Endothelial cell of umbilical vein (primary cell): ENCODE measurements at regions of chr7 and their contacts with region 1.

Region 1: DNA sequence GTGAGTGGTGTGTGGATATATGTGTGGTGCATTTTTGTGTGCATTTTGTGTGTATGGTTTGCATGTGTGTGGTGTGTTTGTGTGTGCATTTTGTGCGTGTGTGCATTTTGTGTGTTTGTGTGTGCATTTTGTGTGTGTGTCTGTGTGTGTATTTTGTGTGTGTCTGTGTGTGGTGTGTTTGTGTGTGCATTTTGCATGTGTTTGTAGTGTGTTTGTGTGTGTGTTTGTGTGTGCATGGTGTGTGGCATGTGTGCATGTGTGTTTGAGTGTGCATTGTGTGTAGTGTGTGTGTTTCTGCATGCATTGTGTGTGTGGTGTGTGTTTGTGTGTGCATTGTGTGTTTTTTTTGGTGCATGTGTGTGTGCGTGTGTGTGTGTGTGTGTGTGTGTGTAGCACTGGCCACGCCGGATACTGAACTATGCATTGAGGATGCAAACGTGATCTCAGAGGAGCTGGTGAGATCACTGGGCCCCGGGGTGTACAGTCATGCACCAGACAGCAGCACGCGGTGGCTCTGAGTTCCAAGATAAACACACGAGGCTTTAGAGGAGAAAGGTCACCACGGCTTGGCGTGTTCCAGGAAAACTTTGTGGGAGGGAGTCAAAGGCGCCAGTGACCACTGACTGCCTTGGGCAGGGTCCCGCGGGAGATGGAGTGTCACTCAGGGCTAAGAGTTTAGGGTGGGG is 106.6 kb upstream of the SHH start:
- DNase-seq: peak; percentile 48
- H3K4me3 ChIP-seq: no peak overlapping the region
- H3K27ac ChIP-seq: peak overlapping the region; percentile 10
- H3K4me1 ChIP-seq: peaks cover 2% of the 10 kb centered on the region
- H3K27me3 ChIP-seq: no peaks in the 10 kb centered on the region
- CTCF ChIP-seq: no peak
- POLR2A ChIP-seq: no peak

Region 2: DNA sequence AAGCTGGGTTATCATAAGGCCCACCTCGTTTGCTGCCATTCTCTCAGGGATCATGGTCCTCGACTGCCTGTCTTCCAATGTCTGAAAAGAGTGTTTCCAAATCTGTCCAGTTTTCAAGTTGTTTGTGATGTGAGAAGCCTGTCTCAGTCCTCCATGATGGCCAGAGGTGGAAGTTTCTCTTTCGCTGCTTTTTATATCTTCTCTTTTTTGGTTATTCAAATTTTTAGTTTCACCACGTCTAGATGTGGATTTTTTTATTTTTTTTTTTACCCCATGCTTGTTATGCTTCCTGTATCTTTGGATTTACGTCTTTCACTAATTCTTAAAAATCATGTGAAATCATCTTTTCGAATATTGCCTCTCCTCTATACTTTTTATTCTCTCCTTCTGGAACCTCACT is 280.5 kb before region 1 on chr7:
- CTCF ChIA-PET with region 1: no interaction called
- POLR2A ChIA-PET with region 1: no interaction called
- dilution Hi-C with region 1: no loop called
- intact Hi-C with region 1: no loop called
- DNase-seq: no peak
- H3K4me3 ChIP-seq: no peak overlapping the region
- H3K27ac ChIP-seq: no peak overlapping the region
- H3K4me1 ChIP-seq: peaks cover 1% of the 10 kb centered on the region
- H3K27me3 ChIP-seq: peaks cover 0 to 3% of the 10 kb centered on the region in 2 experiments
- CTCF ChIP-seq: no peak
- POLR2A ChIP-seq: no peak

Region 3: GRCh38 chr7:155961241-155962190 is 42.7 kb after region 1 on chr7:
- CTCF ChIA-PET with region 1: no interaction called
- POLR2A ChIA-PET with region 1: no interaction called
- dilution Hi-C with region 1: no loop called
- intact Hi-C with region 1: loop called (anchors 1 kb)
- DNase-seq: no peak
- H3K4me3 ChIP-seq: no peak overlapping the region
- H3K27ac ChIP-seq: peak overlapping the region; percentile 53
- H3K4me1 ChIP-seq: peaks cover 3% of the 10 kb centered on the region
- H3K27me3 ChIP-seq: no peaks in the 10 kb centered on the region
- CTCF ChIP-seq: no peak
- POLR2A ChIP-seq: no peak

Region 4: DNA sequence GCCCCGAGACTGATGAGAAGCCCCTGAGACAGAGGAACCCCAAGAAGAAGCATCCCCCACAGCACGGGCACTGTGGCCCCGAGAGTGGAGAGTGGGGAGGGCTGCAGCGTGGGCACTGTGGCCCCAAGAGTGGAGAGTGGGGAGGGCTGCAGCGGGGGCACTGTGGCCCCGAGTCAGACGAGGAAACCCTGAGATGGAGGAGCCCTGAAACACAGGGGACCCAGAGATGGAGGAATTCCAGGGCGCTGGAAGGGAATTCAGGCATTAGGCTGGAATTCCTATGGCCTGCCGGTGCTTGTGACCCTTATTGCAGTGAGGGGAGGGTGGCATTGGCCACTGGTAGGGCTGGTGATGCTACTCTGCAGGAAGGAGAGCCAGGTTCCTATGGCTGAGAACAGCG is 62.0 kb after region 1 on chr7:
- CTCF ChIA-PET with region 1: no interaction called
- POLR2A ChIA-PET with region 1: no interaction called
- dilution Hi-C with region 1: no loop called
- intact Hi-C with region 1: no loop called
- DNase-seq: no peak
- H3K4me3 ChIP-seq: no peak overlapping the region
- H3K27ac ChIP-seq: no peak overlapping the region
- H3K4me1 ChIP-seq: no peaks in the 10 kb centered on the region
- H3K27me3 ChIP-seq: no peaks in the 10 kb centered on the region
- CTCF ChIP-seq: no peak
- POLR2A ChIP-seq: no peak

Region 5: DNA sequence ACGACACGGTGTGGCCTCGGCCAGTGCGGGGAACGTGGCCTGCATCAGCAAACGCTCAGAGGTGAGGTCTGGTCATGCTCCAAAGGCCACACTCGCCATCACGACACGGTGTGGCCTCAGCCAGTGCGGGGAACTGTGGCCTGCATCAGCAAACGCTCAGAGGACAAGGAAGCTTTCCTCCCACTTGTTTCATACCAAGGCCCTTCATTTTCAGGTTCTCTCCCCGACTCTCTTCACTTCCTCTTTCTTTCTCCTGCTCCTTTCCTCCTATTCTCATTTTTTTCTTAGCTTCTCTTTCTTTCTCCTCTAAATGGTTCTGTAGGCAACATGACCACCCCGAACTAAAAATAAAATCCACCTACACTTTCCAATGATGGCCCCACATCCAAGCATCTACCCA is 277.8 kb after region 1 on chr7:
- CTCF ChIA-PET with region 1: no interaction called
- POLR2A ChIA-PET with region 1: no interaction called
- dilution Hi-C with region 1: no loop called
- intact Hi-C with region 1: no loop called
- DNase-seq: no peak
- H3K4me3 ChIP-seq: no peak overlapping the region
- H3K27ac ChIP-seq: no peak overlapping the region
- H3K4me1 ChIP-seq: no peaks in the 10 kb centered on the region
- H3K27me3 ChIP-seq: no peaks in the 10 kb centered on the region
- CTCF ChIP-seq: no peak
- POLR2A ChIP-seq: no peak